ENCODE measurements at regions of chr7 and their contacts with region 1.

Region 1: DNA sequence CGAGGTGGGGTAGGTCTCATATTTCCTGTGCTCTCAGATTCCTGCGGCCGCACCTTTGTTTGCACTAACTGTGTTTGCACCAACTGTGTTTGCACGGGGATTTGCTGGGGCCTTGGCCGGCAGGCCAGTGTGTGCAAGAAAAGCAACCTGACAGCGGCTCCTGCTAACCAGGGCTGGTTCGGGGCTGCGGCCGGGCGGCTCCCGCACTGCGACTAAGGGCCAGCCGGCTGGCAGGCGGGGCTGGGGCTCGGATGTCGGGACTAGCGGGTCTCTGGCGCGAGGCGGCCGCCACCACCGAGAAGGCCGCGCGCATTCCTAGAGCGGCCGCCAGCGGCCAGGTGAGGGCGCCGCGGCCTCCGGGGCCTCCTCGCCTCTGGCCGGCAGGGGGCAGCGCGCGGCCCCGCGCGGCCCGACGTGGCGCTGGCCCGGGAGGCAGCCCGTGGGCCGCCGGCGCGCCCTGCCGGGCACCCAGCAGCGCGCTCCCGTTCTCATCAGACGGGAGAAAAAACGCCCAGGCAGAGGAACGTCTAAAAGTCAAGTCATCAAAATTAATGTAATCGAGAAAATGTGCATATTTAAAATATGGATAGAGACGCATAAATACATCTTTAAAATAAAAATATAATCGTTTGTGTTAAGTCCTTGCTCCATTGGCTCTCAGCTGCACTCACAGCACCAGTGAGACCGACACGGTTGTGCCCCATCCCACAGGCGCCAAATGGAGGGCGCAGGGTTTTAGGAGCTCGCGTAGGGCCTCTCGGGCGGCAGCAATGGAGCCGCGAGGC is 38.5 kb downstream of the ZNF777 start:
- DNase-seq: peak; percentile 66
- H3K4me3 Mint-ChIP-seq: peak overlapping the region; percentile 67
- H3K27ac Mint-ChIP-seq: peak overlapping the region; percentile 65
- H3K4me1 Mint-ChIP-seq: peaks cover 7% of the 10 kb centered on the region
- H3K27me3 Mint-ChIP-seq: peaks cover 2% of the 10 kb centered on the region

Region 2: DNA sequence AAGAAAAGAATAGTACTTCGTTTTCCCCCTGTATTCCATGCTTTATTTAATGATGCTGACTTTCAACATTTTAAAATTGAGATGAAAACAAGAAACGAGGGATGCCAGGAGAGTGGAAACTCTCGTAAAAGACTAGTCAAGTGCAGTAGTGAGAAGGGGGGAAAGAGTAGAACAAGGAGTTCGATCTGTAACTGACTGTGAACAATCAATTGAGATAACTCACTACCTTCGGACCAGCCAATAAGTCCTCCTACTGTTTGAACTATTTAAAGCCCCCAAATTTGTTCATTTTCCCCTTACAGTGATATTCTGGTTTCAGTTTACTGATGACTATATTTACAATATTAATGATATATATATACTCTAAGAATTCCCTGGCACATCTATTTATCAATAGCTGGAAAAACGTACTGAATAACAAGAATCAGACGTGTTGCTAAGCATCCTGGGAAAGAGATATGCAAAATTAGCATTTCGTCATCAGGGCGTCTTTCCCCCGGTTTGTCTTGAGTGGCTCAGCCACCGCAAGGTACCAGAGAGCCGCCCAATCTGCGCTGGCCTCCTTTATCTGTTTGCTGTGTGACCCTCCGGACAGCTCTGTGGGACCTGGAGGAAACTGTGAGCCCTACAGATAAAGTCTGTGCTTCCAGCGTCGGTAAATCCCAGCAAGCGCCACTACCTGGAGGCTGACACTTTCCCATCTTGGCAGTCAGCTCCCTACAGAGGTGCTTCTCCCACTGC is 435.1 kb before region 1 on chr7:
- CTCF ChIA-PET with region 1: no interaction called
- intact Hi-C with region 1: loop called (anchors 1 kb)
- DNase-seq: peak; percentile 88
- H3K4me3 Mint-ChIP-seq: peak overlapping the region; percentile 98
- H3K27ac Mint-ChIP-seq: peak overlapping the region; percentile 93
- H3K4me1 Mint-ChIP-seq: peaks cover 40% of the 10 kb centered on the region
- H3K27me3 Mint-ChIP-seq: peaks cover 7% of the 10 kb centered on the region

Region 3: GRCh38 chr7:149195180-149196150 is 226.9 kb before region 1 on chr7 and contains the start of gene ZNF282:
- CTCF ChIA-PET with region 1: interaction called, 6 read pairs
- intact Hi-C with region 1: loop called (anchors 1 kb)
- DNase-seq: peak; percentile 85
- H3K4me3 Mint-ChIP-seq: peak within 1 kb of the TSS; percentile 85
- H3K27ac Mint-ChIP-seq: peak within 1 kb of the TSS; percentile 78
- H3K4me1 Mint-ChIP-seq: peaks cover 30% of the 10 kb centered on the region
- H3K27me3 Mint-ChIP-seq: no peaks in the 10 kb centered on the region
- total RNA-seq, gene ZNF282: 21.6 to 22.0 TPM

Region 4: DNA sequence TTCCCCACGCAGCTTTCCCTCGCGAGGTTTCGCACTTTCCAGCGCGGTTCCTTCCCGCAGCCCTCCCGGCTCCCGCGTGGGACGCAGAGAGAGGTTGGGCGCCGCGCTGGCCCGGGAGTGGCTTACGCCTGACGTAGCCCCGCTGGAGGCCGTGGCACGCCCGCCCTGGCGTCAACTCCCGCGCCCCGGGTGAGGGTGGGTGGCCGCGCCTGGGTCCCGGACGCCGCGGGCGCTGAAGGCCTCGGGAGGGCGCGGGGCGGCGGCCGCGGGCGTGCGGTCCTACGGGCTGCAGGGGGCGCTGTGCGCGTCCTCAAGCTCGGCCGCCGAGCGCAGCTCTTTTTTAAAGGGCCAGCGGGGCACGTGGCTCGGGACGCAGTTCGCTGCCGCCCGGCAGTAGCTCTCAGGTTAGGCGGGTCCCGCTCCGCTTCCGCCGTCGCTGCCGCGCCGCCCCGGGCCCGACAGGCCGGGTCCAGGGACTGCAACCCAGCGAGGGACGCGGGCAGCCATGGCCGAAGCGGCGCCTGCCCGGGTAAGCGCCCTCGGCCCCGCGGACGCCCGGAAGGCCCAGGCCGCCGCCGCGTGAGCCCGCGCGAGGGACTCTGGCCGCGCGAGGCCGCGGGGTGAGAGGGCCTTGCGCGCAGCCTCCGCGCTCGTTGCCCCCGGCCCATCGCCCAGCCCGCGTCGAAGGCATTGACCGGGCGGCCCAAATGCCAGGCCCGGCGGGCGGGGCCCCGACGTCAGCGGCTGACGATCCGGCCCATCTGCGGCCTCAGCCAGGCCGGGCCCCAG is 160.3 kb before region 1 on chr7 and contains the start of gene ZNF783:
- CTCF ChIA-PET with region 1: no interaction called
- intact Hi-C with region 1: loop called (anchors 1 kb)
- DNase-seq: peak; percentile 85
- H3K4me3 Mint-ChIP-seq: peak within 1 kb of the TSS; percentile 75
- H3K27ac Mint-ChIP-seq: peak within 1 kb of the TSS; percentile 74
- H3K4me1 Mint-ChIP-seq: peaks cover 29% of the 10 kb centered on the region
- H3K27me3 Mint-ChIP-seq: no peaks in the 10 kb centered on the region
- total RNA-seq, gene ZNF783: 6.8 to 7.1 TPM

Region 5: DNA sequence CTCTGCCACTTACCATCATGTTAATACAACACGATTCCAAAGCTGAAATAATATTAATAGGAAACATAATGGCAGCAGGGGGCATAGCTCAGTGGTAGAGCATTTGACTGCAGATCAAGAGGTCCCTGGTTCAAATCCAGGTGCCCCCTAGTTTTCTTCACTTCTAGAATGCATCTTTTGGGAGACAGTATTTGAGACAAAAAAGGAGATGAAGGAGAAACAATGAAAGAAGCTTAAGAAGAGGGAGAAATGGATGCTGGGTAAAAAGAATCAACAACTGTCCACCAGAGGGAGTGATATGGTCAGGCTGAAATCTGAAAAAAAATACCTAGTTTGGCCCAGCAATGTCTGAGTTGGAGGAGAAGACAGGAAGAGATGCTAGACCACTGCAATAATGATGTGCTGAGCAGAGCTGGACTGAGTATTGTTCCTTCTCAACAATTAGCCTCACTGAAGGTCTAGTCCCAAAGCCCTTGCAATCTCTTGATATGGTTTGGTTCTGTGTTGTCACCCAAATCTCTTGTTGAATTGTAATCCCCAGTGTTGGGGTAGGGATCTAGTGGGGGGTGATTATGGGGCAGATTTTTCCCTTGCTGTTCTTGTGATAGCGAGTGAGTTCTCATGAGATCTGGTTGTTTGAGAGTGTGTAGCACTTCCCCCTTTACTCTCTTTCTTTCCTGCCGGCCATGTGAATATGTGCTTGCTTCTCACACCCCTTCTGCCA is 112.0 kb before region 1 on chr7:
- CTCF ChIA-PET with region 1: interaction called, 6 read pairs
- intact Hi-C with region 1: loop called (anchors 1 kb)
- DNase-seq: no peak
- H3K4me3 Mint-ChIP-seq: no peak overlapping the region
- H3K27ac Mint-ChIP-seq: no peak overlapping the region
- H3K4me1 Mint-ChIP-seq: peaks cover 2% of the 10 kb centered on the region
- H3K27me3 Mint-ChIP-seq: no peaks in the 10 kb centered on the region

Region 6: DNA sequence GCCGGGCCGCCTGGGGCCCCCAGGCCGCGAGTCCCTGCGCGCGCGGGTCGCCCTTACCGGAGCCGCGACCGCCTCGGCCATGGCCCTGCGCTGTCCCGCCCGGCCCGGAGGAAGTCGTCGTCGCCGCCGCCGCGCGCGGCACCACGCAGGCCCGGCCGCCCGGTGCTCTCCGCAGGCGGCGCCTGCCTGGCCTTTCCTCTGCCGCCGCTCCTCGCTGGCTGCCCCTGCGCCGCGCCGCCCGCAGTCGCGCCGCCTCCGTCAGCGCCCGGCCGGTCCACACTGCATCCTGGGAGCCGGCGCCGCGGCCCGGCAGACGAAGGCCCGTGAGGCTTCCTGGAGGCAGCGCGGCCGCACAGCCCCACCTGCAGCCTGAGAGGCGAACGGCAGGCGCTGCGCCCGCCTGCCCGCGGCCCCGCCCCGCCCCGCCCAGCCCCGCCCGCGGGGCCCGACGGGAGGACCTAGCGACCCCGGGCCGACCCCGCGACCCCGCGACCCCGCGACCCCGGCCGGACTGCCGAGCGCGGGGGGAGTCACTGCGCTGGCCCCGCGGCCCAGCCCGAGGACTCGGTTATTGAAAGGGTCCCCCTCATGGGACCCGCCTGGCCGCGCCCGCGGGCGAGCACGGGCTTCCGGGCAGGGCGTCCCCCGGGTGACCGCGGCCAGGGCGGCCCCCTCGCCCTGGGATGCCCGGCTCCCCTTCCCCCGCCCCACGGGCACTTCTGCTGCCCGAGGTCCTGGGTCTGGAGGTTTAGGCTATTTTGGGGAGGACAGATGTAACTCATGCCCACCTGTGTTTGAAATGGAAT is 75.3 kb after region 1 on chr7 and contains the start of gene ZNF746:
- CTCF ChIA-PET with region 1: interaction called, 13 read pairs
- intact Hi-C with region 1: loop called (anchors 1 kb)
- DNase-seq: peak; percentile 84
- H3K4me3 Mint-ChIP-seq: peak within 1 kb of the TSS; percentile 93
- H3K27ac Mint-ChIP-seq: peak within 1 kb of the TSS; percentile 90
- H3K4me1 Mint-ChIP-seq: peaks cover 24% of the 10 kb centered on the region
- H3K27me3 Mint-ChIP-seq: peaks cover 2% of the 10 kb centered on the region
- total RNA-seq, gene ZNF746: 11.8 to 12.0 TPM

Region 7: DNA sequence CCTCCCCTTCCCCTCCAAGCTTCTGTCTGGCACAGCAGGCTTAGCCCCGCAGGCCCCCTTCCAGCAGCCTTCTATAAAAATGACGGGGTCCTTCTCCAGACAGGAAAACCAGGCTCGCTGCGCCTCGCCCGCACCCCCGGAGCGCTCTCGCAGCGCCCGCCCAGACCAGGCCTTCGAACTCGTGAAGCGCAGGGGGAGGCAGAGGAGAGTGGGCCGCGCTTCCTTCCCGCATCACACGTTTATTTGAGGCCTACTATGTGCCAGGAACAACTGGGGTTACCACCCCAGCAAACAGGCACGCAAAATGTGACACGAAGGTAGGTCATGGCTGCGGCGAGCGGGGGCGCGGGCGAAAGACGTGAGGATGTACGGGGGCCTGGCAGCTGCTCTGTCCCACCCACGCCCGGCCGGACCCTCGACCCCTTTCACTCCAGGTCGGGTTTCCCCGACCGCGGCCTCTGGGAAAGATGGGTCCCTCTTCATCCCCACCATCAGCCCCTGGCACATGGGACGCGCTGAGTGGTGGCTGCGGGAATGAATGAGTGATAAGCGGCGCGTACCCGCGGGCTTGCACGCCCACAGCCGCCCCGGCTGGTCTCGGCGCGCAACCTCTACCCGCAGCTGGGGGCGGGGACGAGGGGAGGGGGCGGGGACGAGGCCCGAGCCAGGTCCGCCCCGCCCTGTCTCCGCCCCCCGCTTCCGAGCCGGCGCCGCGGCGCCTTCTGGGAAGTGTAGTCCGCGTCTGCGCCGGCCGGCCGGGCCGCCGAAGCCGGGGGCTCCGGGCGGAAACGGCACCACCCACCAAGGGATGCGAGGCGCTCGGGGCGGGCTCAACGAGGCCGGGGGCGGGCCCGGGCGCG is 292.0 kb after region 1 on chr7:
- CTCF ChIA-PET with region 1: interaction called, 4 read pairs
- intact Hi-C with region 1: loop called (anchors 10 kb)
- DNase-seq: peak; percentile 94
- H3K4me3 Mint-ChIP-seq: peak overlapping the region; percentile 73
- H3K27ac Mint-ChIP-seq: no peak overlapping the region
- H3K4me1 Mint-ChIP-seq: peaks cover 17% of the 10 kb centered on the region
- H3K27me3 Mint-ChIP-seq: no peaks in the 10 kb centered on the region

Measured in activated naive CD4-positive, alpha-beta T cell treated with anti-CD3 and anti-CD28 coated beads for 36 hours (primary cell).